ENCODE measurements at regions of chr1 and their contacts with region 1.

Region 1: DNA sequence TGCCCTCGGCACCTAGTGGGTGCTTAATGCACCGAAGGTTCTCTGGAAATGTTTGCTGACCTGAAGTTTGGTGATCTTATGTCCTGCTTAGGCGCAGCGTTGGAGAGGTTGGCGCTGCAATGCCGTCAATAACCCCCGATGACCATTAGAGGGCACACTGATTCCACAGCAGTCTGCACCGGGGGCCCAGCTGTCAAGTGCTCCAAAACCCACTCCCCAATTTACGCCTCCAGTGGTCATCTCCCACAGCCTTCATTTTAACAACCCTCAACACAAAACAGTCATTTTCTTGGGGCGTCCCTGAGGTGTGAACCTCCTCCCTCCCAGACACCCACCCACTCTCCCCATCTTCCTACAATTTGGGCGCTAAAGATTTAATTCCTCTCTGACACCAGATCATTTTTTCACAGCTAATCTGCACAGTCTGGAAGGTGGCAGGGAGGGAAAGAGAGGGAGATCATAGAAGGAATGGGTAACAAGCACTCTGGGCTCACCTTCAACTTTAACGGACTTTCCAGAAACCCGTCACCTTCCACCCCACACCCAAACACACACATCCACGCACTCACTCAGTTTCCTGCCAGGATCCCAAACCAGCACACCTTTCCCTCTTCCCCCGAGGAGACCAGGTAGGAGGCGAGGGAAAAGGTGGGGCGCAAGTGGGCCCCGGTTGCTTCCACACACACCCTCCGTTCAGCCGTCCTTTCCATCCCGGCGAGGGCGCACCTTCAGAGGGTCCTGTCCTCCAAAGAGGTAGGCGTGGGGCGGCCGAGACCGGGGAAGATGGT is 576 bp upstream of the NPR1 start:
- DNase-seq: peak; percentile 17 to 69
- H3K4me3 ChIP-seq: no peak overlapping the region
- H3K4me1 ChIP-seq: no peaks in the 10 kb centered on the region
- H3K27me3 ChIP-seq: peaks cover 2% of the 10 kb centered on the region

Region 2: GRCh38 chr1:153768316-153769181 is 90.6 kb after region 1 on chr1:
- in situ Hi-C with region 1: loop called (anchors 5 kb)
- DNase-seq: no peak
- H3K4me3 ChIP-seq: no peak overlapping the region
- H3K4me1 ChIP-seq: no peaks in the 10 kb centered on the region
- H3K27me3 ChIP-seq: no peaks in the 10 kb centered on the region